Activated CD8-positive, alpha-beta memory T cell treated with anti-CD3 and anti-CD28 coated beads, Interleukin-2, amount 10 ng/mL, durations not matched to agents 7 days and 5 days (primary cell): ENCODE measurements at regions of chr14 and their contacts with region 1.

Region 1: GRCh38 chr14:76918751-76919543 is 92.7 kb downstream of the LRRC74A start:
- DNase-seq: no peak
- ATAC-seq: no peak
- H3K4me3 Mint-ChIP-seq: no peak overlapping the region
- H3K27ac Mint-ChIP-seq: no peak overlapping the region
- H3K4me1 Mint-ChIP-seq: peaks cover 15% of the 10 kb centered on the region
- H3K27me3 Mint-ChIP-seq: no peaks in the 10 kb centered on the region

Region 2: GRCh38 chr14:76876076-76876475 is 42.9 kb before region 1 on chr14:
- CTCF ChIA-PET with region 1: interaction called, 117 read pairs
- DNase-seq: peak; percentile 55
- ATAC-seq: peak; percentile 82
- H3K4me3 Mint-ChIP-seq: no peak overlapping the region
- H3K27ac Mint-ChIP-seq: no peak overlapping the region
- H3K4me1 Mint-ChIP-seq: no peaks in the 10 kb centered on the region
- H3K27me3 Mint-ChIP-seq: peaks cover 7% of the 10 kb centered on the region

Region 3: GRCh38 chr14:76931631-76932402 is 12.9 kb after region 1 on chr14:
- CTCF ChIA-PET with region 1: interaction called, 58 read pairs
- DNase-seq: no peak
- ATAC-seq: no peak
- H3K4me3 Mint-ChIP-seq: no peak overlapping the region
- H3K27ac Mint-ChIP-seq: peak overlapping the region; percentile 56
- H3K4me1 Mint-ChIP-seq: peaks cover 49% of the 10 kb centered on the region
- H3K27me3 Mint-ChIP-seq: no peaks in the 10 kb centered on the region

Region 4: GRCh38 chr14:76947078-76947837 is 28.3 kb after region 1 on chr14:
- CTCF ChIA-PET with region 1: interaction called, 18 read pairs
- DNase-seq: peak; percentile 83
- ATAC-seq: peak; percentile 92
- H3K4me3 Mint-ChIP-seq: no peak overlapping the region
- H3K27ac Mint-ChIP-seq: no peak overlapping the region
- H3K4me1 Mint-ChIP-seq: peaks cover 39% of the 10 kb centered on the region
- H3K27me3 Mint-ChIP-seq: no peaks in the 10 kb centered on the region

Region 5: GRCh38 chr14:76962303-76962660 is 43.3 kb after region 1 on chr14:
- CTCF ChIA-PET with region 1: interaction called, 17 read pairs
- DNase-seq: peak; percentile 48
- ATAC-seq: peak; percentile 11
- H3K4me3 Mint-ChIP-seq: peak overlapping the region; percentile 42
- H3K27ac Mint-ChIP-seq: peak overlapping the region; percentile 95
- H3K4me1 Mint-ChIP-seq: peaks cover 74% of the 10 kb centered on the region
- H3K27me3 Mint-ChIP-seq: peaks cover 46% of the 10 kb centered on the region

Region 6: GRCh38 chr14:77028384-77029231 is 109.7 kb after region 1 on chr14 and contains the start of gene IRF2BPL:
- CTCF ChIA-PET with region 1: interaction called, 81 read pairs
- DNase-seq: peak; percentile 97
- ATAC-seq: peak; percentile 78
- H3K4me3 Mint-ChIP-seq: peak within 1 kb of the TSS; percentile 89
- H3K27ac Mint-ChIP-seq: peak within 1 kb of the TSS; percentile 93
- H3K4me1 Mint-ChIP-seq: peaks cover 57% of the 10 kb centered on the region
- H3K27me3 Mint-ChIP-seq: no peaks in the 10 kb centered on the region
- total RNA-seq, gene IRF2BPL: 19.7 to 24.9 TPM

Region 7: GRCh38 chr14:77053046-77053841 is 134.3 kb after region 1 on chr14:
- CTCF ChIA-PET with region 1: interaction called, 123 read pairs
- DNase-seq: peak; percentile 78
- ATAC-seq: peak; percentile 92
- H3K4me3 Mint-ChIP-seq: no peak overlapping the region
- H3K27ac Mint-ChIP-seq: no peak overlapping the region
- H3K4me1 Mint-ChIP-seq: peaks cover 7% of the 10 kb centered on the region
- H3K27me3 Mint-ChIP-seq: no peaks in the 10 kb centered on the region